Activated CD4-positive, alpha-beta T cell treated with anti-CD3 and anti-CD28 coated beads, Interleukin-2, amount 10 ng/mL, durations not matched to agents 24 days and 14 days (primary cell): ENCODE measurements at regions of chr3 and their contacts with region 1.

Region 1: DNA sequence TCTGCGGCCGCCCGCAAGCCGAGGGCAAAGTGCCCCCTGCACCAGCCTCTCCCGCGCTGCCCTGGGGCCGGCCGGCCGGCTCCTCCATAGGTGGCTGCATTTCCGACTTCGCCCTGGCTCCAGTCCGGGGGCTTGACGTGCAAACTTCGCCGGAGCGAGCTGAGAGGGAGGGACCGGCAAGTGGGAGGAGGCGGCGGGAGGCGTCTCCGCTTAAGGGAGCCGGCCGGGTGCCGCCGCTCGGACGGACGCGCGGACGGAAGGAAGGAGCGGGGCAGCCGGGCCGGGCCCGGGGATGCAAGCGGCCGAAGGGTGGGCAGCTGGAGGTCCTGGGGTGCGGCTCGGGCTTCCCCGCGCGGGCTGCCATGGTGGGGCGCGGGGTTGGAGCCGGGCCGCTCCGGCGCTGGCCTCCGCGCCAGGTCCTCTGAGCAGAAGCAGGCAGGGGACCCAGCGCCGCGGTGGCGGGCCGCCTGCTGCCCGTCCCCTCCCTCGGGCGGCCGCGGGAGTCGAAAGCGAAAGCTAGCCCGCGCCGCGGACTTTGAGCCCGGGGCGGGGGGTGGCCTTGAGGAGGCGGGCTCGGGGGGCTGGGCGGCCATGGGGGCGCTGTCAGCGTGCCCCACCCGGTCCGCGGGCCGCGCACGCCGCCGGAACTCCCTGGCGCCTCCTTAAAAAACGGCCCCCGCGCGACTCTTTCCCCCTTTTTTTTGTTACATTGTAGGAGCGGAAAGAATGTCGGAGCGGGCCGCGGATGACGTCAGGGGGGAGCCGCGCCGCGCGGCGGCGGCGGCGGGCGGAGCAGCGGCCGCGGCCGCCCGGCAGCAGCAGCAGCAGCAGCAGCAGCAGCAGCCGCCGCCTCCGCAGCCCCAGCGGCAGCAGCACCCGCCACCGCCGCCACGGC is at the start of gene SCAANT1:
- DNase-seq: peak; percentile 95
- H3K4me3 Mint-ChIP-seq: peak within 1 kb of the TSS; percentile 92
- H3K27ac Mint-ChIP-seq: peak within 1 kb of the TSS; percentile 94
- H3K4me1 Mint-ChIP-seq: peaks cover 40% of the 10 kb centered on the region
- H3K27me3 Mint-ChIP-seq: no peaks in the 10 kb centered on the region
- total RNA-seq, gene SCAANT1: not detected in 2 replicates

Region 2: DNA sequence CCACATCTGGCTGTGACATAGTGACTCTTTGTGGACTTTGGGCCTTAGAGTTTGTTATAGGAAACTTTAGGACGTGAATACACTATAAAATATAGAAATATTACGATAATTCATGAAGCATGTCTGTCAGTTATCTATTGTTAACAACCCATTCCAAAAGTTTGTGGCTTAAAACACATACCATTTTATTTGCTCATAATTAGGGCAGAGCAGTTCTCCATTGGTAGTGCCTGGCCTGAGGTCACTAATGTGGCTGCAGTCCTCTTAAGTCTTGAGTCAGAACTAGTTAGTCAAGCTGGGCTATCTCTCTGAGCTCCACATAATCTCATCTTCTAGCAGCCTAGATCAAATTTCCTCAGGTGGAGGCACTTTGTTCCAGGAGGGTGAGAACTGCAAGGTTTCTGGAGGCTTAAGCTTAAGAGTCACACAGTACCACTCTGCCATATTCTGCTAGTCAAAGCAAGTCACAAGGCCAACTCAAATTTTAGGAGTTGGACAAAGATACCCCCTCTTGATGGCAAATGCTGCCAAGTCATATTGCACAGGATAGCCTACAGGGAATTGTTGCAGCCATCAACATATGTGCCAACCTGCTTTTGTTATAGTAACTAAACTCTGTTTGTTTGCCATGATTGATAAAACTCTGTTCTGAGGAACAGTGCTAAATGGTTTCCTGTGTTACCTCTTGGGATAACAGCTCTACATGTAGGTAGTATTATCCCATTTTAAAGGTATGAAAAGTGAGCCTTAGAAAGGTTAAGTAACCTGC is 39.8 kb before region 1 on chr3:
- intact Hi-C with region 1: no loop called
- DNase-seq: no peak
- H3K4me3 Mint-ChIP-seq: no peak overlapping the region
- H3K27ac Mint-ChIP-seq: no peak overlapping the region
- H3K4me1 Mint-ChIP-seq: peaks cover 30% of the 10 kb centered on the region
- H3K27me3 Mint-ChIP-seq: no peaks in the 10 kb centered on the region

Region 3: GRCh38 chr3:63896332-63897030 is 15.6 kb before region 1 on chr3:
- intact Hi-C with region 1: loop called (anchors 1 kb)
- DNase-seq: no peak
- H3K4me3 Mint-ChIP-seq: no peak overlapping the region
- H3K27ac Mint-ChIP-seq: peak overlapping the region; percentile 1
- H3K4me1 Mint-ChIP-seq: peaks cover 42% of the 10 kb centered on the region
- H3K27me3 Mint-ChIP-seq: no peaks in the 10 kb centered on the region

Region 4: GRCh38 chr3:63967675-63968611 is 55.8 kb after region 1 on chr3:
- intact Hi-C with region 1: loop called (anchors 1 kb)
- DNase-seq: peak; percentile 82
- H3K4me3 Mint-ChIP-seq: peak overlapping the region; percentile 87
- H3K27ac Mint-ChIP-seq: peak overlapping the region; percentile 96
- H3K4me1 Mint-ChIP-seq: peaks cover 80% of the 10 kb centered on the region
- H3K27me3 Mint-ChIP-seq: no peaks in the 10 kb centered on the region

Region 5: GRCh38 chr3:64023187-64023848 is 111.2 kb after region 1 on chr3 and contains the start of gene PSMD6:
- intact Hi-C with region 1: loop called (anchors 1 kb)
- DNase-seq: peak; percentile 99
- H3K4me3 Mint-ChIP-seq: peak within 1 kb of the TSS; percentile 79
- H3K27ac Mint-ChIP-seq: peak within 1 kb of the TSS; percentile 92
- H3K4me1 Mint-ChIP-seq: peaks cover 19% of the 10 kb centered on the region
- H3K27me3 Mint-ChIP-seq: peaks cover 13% of the 10 kb centered on the region
- total RNA-seq, gene PSMD6: 141 and 146 TPM in 2 replicates

Region 6: DNA sequence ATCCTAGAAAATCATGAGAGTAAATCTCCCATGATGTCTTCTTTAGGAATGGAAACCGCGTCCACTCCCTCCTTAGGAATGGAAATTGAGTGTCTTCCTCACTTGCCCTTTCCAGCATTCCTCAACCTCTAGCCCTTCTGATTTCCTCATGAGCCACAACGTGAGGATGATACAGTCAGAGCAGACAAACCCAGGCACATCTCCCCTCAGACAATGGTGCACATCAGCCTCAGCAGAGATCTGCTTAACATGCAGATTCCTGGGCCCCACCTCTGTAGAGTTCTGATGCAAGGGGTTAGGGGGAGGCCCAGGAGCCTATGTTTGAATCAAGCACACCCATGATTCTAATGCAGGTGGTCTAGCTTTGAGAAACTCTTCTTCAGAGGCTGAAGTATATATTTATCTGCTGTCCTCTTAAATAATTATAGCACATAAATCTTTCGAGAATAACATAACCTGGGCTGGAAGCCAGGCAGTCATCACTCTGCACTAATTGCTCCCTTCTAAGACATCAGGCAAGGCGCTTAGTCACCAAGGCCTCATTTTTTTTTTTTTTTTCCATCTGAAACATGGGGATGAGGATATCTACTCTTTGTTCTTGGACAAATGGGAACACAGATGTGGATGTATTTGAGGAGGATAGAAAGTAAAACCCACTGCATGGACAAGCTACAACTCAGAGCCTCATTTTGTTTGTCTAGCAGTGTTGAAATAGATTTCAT is 231.4 kb after region 1 on chr3:
- intact Hi-C with region 1: no loop called
- DNase-seq: no peak
- H3K4me3 Mint-ChIP-seq: no peak overlapping the region
- H3K27ac Mint-ChIP-seq: no peak overlapping the region
- H3K4me1 Mint-ChIP-seq: no peaks in the 10 kb centered on the region
- H3K27me3 Mint-ChIP-seq: no peaks in the 10 kb centered on the region